ENCODE measurements at regions of chr11 and their contacts with region 1.

Region 1: DNA sequence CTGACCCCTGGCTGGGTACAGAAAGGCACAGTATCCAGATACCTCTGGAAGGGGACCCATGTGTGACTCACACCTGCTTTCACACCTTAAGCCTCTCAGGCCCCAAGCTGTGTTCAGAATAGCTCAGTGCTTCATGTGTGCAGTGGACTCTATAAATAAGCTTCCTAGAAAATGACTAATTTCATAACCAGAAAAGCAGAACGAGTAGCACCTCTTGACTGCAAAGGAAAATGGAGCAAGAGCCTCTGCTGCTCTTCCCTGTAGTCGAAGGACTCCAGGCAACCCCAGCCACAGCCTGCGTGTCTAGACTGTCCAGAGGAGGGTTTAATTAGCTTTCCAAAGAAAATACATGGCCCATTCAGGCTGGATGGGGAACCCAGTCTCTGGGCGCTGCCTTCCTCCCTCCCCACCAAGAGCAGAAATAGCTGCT is 23.1 kb downstream of the PTPN5 start:
- DNase-seq: peak; percentile 69
- CTCF ChIP-seq: no peak

Region 2: GRCh38 chr11:17770048-17770652 is 998.3 kb before region 1 on chr11:
- CTCF ChIA-PET with region 1: no interaction called
- POLR2A ChIA-PET with region 1: no interaction called
- DNase-seq: no peak
- CTCF ChIP-seq: no peak

Region 3: DNA sequence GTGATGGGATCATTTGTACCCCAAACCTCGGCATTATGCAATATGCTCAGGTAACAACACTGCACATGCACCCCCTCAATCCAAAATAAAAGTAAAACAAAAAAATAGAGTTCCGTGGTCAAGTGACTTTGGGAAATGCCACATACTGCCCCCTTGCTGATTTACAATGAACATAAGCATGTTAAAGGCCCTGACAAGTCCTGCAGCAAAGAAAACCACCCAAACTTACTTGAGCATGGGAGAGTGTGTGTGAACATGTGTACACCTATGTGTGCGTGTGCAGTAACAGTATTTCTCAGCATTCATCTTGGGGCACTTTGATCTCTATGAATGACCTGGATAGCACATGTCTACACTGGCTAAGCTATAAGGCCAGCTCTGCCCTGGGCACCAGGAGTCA is 26.7 kb before region 1 on chr11:
- CTCF ChIA-PET with region 1: interaction called, 15 read pairs
- POLR2A ChIA-PET with region 1: no interaction called
- DNase-seq: no peak
- CTCF ChIP-seq: no peak

Region 4: GRCh38 chr11:18754308-18754707 is 14.2 kb before region 1 on chr11:
- CTCF ChIA-PET with region 1: interaction called, 19 read pairs
- POLR2A ChIA-PET with region 1: interaction called, 3 read pairs
- DNase-seq: no peak
- CTCF ChIP-seq: no peak